AG04449 (cell line): ENCODE measurements at regions of chr5 and their contacts with region 1.

Region 1: DNA sequence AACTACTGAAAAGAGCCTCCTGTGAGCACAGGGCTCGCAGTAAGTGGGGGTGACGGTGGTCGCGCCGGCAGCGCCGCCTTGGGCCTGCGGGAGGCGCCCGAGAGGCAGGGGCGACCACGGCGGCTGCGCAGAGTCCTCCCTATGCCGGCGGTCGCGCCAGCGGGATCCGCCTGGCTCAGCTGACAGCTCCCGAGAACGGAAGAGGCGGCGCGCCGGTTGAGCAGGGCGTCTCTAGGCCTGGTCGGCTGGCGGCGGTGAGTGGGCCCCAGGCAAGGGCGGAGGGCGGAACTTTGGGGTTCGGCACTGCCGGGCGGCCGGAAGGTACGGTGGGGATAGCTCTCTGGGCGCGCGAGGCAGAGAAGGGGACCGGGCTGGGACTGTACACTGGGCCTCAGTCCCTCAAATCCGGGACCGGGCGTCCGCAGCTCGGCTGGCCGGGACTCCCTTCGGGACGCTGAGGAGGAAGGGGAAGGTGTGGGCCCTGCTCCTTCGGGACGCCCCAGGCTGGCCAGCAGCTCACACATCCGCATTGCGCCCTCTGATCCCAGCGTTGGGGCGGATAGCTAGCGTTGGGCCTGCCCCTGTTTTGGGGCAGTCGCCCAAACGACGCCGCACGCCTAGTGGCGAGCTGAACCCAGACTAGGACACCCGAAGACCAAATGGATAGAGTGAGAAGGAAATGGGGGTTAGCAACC is at the start of gene RNF14:
- DNase-seq: peak; percentile 28
- H3K4me3 ChIP-seq: peak within 1 kb of the TSS; percentile 88
- CTCF ChIP-seq: peak; percentile 88

Region 2: DNA sequence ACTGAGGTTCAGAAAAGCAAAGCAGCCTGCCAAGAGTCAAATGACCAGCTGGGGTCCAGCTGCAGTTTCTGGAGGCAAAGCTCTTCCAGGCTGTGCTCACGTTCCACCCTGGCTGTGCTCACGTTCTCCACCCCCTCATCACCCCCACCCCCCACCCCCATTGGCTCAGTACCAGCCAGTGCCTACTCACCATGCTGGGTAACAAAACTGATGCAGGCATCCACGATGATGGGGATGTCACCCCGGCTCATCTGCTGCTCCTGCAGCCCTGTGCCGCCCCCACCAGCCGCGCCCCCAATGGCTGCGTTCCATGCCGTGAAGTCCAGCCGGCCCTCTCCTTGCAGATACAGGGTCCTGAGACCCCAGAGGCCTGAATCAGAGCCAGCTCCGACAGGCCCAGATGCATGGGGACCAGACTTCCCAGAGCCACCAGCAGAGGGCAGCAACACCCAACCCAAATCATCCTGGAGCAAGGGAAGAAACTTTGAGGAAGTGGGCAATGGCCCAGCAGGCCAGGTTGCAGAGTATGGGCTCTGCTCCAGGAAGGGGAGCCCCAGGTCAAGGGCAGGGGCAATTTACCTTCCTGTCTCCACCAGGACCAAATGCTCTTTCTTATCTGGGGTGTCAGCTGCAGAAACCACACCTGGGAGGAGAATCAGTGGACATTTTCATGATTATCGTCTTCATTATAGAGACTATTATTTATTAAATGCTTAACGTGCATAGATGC is 304.2 kb before region 1 on chr5:
- CTCF ChIA-PET with region 1: interaction called, 132 read pairs
- POLR2A ChIA-PET with region 1: no interaction called
- DNase-seq: no peak
- H3K4me3 ChIP-seq: no peak overlapping the region
- CTCF ChIP-seq: peak; percentile 90

Region 3: DNA sequence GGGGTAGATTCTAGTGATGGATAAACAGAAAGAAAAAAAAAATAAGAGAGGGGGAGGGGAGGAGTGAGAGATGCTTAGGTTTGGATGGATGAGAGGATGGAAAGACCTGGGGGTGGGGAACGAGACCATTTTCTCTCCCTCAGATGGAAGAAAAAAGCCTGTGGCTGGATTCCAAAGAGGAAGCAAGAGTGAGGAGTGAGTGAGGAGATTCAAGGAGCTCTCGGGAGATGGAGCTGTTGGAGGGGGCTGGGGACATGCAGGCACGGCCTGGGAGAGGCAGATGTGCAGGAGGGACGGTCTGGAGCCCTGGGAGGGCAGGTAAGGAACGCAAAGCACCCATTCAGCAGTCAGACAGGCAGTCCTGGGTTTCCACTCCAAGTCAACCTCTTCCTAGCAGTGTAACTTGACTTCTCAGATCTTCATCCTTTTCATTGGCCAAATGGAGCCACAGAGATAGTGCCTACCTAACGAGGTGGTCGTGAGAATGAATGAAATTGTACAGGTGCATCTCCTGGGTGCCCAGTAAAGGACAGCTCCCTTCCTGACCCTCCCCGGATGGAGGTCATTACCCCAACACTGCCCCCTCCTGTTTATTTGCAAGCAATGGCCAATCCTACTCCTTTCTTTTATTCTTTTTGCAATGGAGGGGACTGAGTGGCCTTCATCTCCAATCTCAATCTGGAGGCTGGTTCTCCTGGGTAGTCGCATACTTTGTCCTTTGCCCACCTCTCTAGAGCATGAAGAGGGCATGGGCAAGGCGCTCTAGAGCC is 143.1 kb before region 1 on chr5:
- CTCF ChIA-PET with region 1: no interaction called
- POLR2A ChIA-PET with region 1: no interaction called
- DNase-seq: no peak
- H3K4me3 ChIP-seq: no peak overlapping the region
- CTCF ChIP-seq: no peak

Region 4: DNA sequence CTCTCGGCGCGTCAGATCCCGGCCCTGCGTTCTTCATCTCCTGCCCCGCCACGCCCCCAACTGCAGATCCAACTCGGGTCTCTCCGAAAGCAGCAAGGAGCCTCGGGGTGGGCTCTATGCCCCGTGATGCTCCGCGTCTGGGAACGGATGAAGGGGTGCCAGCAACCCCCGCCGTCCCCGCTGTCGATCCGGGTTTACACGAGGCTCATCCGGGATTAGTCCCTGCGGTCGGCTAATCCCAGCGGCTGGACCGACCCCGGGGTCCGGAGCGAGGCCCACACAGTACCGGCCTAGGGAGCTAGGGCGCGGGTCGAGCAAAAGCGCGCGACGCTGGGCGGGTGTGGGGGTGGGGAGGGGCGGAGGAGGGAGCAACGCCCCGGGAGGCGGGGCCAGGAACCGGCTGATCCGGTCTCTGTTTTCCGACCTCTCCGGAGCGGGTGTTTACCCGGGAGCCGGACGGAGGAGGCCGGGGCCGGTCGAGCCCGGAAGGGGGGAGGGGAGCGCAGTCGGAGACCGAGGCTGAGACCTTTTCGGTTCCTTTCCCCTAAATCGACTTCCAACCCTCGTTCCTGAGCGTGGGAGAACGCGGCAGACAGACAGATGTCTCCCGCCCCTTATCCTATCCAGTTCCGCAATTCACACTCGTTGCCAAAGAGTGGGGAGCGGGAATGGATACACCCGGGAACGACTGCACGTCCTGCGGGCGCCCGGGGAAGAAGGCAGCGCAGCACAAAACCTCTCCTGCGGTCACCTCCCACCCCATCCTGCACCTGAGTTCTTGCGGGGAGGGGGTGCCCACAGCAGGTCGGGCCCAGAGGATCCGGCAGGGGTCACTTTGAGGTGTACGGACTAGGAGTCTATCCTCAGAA is 119.5 kb before region 1 on chr5:
- CTCF ChIA-PET with region 1: no interaction called
- POLR2A ChIA-PET with region 1: no interaction called
- DNase-seq: no peak
- H3K4me3 ChIP-seq: peak overlapping the region; percentile 74
- CTCF ChIP-seq: no peak

Region 5: DNA sequence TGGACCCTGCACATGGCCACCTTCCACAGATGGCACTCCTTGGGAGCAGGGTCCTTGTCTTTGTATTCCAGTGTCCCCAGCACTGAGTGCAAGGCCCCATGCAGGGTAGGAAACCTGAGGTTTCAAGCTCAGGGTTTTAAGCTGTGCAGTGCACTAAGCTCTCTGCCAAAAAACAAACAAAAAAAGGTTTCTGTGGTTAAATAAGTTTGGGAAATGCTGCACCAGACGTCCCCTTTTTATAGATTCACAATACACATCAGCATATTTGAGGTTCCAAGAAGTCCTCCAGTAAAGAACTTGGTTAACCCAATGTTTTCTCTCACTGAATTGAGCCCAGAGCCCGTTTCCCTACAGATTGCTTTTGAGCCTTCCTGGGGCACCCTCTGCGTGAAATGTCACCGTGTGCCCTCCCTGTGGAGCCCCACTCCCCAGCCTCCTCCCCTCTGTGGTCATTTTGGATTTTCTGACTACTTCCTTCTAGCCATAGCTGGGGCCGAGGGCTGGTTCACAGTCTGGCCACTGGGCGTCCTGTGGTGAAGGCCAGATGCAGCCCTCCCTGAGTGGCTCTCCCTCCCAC is 28.3 kb before region 1 on chr5:
- CTCF ChIA-PET with region 1: interaction called, 260 read pairs
- POLR2A ChIA-PET with region 1: no interaction called
- DNase-seq: no peak
- H3K4me3 ChIP-seq: no peak overlapping the region
- CTCF ChIP-seq: no peak

Region 6: DNA sequence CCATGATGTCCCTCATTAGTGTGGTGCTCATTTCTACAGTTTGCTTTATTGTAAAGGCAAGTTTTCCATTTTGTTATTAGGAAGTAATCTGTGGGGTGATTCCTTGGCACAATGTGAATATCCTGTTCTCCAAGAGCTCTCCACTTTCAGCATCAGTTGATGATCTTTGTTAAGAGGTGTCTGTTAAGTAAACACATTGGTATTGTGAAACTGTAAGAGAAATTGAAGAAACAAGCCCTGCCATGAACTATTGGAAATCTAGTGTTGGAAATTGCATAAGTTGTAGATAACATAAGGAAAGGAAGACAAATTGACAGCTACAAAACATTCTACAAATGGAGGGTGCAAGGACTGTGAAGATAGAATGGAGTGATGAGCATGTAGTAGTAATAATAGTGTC is 17.0 kb after region 1 on chr5:
- CTCF ChIA-PET with region 1: interaction called, 34 read pairs
- POLR2A ChIA-PET with region 1: interaction called, 7 read pairs
- DNase-seq: no peak
- H3K4me3 ChIP-seq: no peak overlapping the region
- CTCF ChIP-seq: no peak

Region 7: GRCh38 chr5:142012792-142013388 is 43.8 kb after region 1 on chr5 and contains the start of gene GNPDA1:
- CTCF ChIA-PET with region 1: interaction called, 10 read pairs
- POLR2A ChIA-PET with region 1: interaction called, 3 read pairs
- DNase-seq: no peak
- H3K4me3 ChIP-seq: peak within 1 kb of the TSS; percentile 77
- CTCF ChIP-seq: no peak

Region 8: DNA sequence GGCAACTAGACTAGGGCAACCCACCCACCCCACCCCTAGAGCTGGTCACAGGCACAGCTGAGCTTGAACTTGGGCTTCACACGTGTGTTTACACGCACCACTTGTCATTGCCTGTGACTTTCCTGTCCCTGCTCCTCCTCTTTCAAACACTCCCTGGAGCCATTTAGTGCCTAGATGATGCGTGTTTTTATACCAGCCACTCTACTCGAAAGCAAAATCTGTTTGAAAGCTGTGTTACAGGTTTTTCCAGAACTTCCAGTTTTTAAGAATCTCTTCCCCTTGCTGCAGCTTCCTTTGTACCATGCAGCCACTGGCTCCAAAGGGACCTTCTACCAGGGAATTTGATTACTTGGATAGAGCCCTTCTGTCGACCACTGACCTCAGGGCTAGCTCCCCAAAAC is 434.5 kb after region 1 on chr5:
- CTCF ChIA-PET with region 1: no interaction called
- POLR2A ChIA-PET with region 1: no interaction called
- DNase-seq: no peak
- H3K4me3 ChIP-seq: no peak overlapping the region
- CTCF ChIP-seq: no peak